Testis (tissue), 5 donors: ENCODE measurements at regions of chr10 and their contacts with region 1.

Region 1: DNA sequence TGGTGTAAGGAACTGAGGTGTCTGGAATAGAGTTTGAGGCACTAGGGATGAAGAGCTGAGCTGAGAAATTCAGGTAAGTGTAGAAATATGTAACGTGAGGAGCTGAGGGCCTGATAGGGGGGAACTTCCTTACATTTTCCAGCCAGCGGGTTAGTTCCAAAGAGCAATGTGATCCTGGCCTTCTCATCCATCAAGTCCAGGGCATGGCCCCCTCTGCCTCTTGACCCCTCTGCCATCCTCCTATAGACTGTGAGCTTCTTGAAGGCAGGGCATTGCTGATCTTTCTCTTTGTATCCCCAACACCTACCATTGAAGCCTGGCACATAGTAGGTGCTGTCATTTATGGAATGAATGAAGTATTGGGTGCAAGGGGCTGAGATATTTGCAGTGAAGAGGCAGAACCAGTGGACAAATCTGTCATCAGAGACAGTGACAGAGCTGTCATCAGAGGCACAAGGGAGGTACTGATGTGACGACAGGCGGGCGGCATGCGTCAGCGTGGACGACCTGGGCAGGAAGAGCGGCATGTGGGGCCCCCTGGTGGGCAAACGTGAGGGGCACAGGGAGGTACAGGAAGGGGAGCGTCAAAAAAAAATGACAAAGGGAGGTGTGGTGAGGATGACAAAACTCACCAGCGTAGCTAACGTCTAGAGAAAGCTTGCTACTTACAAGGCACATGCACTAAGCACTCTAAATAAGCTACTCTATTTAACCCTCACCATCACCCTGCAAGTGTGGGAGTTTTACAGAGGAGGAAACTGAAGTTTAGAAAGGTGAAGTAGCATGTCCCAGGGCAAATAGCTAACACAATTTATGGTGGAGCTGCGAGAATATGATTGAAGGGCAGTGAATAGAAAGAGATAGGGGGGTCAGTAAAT is 5.2 kb upstream of the CAMK2G start:
- DNase-seq: peak; percentile 88
- H3K4me3 ChIP-seq: no peak overlapping the region
- H3K27ac ChIP-seq: no peak overlapping the region
- H3K4me1 ChIP-seq: peaks cover 5% of the 10 kb centered on the region
- H3K27me3 ChIP-seq: no peaks in the 10 kb centered on the region
- CTCF ChIP-seq: peak; percentile 87 to 91 (median 89)
- POLR2A ChIP-seq: no peak

Region 2: DNA sequence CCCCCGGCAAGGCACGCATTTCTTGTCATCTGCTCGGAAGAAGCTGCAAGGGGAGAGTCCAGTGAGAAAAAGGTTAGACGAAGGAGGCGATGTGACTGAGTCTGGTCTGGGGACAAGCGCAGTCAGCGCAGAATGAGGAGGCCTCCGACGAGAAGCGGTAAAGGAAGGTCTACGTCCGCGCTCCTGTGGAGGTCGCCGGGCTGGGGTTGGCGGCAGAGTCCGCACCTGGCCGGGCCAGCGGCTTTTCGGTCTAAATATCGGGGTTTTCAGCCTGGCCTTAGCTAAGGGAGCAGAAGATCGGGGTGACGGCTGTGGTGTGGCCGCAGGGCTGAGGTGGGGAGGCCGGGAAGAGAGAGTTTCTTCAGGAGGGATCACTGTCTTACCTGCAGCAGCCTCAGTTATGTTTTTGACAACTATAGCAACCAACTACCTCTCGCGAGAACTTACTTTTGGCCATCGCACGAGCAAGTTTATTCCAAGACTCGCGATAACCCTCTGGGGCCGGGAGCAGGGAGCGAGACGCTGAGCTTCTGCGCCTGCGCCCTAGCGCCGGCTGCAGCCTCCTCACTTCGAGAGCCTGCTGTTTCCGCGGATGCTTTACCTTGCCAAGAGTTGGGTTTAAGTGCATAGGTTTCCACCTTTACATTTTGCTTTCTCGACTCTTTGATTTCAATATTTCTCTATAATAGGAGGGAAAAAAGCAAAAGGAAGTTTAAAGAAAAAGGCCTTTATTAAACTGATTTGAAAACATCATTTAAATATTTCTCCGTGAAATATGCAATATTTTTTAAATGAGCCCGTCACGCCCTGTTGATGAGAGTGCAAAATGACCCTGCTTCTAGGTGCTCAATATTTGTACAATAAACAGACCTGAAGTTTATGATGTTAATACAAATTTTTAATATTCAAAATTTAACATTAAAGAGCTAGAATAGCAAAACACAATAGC is 520.9 kb before region 1 on chr10 and contains the start of gene CFAP70:
- intact Hi-C with region 1: no loop called
- DNase-seq: peak; percentile 95
- H3K4me3 ChIP-seq: peak within 1 kb of the TSS; percentile 70 to 86
- H3K27ac ChIP-seq: peak within 1 kb of the TSS in 1 of 2 donors; percentile 49
- H3K4me1 ChIP-seq: no peaks in the 10 kb centered on the region
- H3K27me3 ChIP-seq: no peaks in the 10 kb centered on the region
- CTCF ChIP-seq: no peak
- POLR2A ChIP-seq: no peak
- total RNA-seq, gene CFAP70: 29.6 to 46.2 TPM

Region 3: DNA sequence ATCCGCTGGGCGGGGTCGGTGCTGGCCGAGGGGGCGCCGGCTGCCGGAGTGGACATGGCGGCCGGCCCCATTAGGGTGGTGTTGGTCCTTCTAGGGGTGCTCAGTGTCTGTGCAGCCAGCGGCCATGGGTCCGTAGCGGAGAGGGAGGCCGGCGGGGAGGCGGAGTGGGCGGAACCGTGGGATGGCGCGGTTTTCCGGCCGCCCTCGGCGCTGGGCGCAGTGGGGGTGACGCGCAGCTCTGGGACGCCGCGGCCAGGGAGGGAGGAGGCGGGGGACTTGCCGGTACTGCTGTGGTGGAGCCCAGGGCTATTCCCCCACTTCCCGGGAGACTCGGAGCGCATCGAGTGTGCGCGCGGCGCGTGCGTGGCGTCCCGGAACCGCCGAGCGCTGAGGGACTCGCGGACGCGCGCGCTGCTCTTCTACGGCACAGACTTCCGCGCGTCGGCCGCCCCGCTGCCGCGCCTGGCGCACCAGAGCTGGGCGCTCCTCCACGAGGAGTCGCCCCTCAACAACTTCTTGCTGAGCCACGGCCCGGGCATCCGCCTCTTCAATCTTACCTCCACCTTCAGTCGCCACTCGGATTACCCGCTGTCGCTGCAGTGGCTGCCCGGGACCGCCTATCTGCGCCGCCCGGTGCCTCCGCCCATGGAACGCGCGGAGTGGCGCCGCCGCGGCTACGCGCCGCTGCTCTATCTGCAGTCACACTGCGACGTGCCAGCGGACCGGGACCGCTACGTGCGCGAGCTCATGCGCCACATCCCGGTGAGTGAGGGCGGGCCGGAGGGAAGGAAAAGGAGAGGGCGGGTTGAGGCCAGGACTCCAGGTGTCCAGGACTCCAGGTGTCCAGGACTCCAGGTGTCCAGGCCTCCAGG is 107.0 kb before region 1 on chr10:
- intact Hi-C with region 1: no loop called
- DNase-seq: peak; percentile 80
- H3K4me3 ChIP-seq: peak overlapping the region; percentile 73 to 92
- H3K27ac ChIP-seq: peak overlapping the region; percentile 95 to 96
- H3K4me1 ChIP-seq: peaks cover 22% of the 10 kb centered on the region
- H3K27me3 ChIP-seq: no peaks in the 10 kb centered on the region
- CTCF ChIP-seq: peak in 1 of 3 experiments; percentile 17
- POLR2A ChIP-seq: peak; percentile 42

Region 4: GRCh38 chr10:73848821-73849489 is 30.6 kb before region 1 on chr10:
- intact Hi-C with region 1: loop called (anchors 2 kb)
- DNase-seq: peak; percentile 91
- H3K4me3 ChIP-seq: no peak overlapping the region
- H3K27ac ChIP-seq: no peak overlapping the region
- H3K4me1 ChIP-seq: peaks cover 18% of the 10 kb centered on the region
- H3K27me3 ChIP-seq: no peaks in the 10 kb centered on the region
- CTCF ChIP-seq: peak; percentile 95 to 99 (median 99)
- POLR2A ChIP-seq: no peak

Region 5: DNA sequence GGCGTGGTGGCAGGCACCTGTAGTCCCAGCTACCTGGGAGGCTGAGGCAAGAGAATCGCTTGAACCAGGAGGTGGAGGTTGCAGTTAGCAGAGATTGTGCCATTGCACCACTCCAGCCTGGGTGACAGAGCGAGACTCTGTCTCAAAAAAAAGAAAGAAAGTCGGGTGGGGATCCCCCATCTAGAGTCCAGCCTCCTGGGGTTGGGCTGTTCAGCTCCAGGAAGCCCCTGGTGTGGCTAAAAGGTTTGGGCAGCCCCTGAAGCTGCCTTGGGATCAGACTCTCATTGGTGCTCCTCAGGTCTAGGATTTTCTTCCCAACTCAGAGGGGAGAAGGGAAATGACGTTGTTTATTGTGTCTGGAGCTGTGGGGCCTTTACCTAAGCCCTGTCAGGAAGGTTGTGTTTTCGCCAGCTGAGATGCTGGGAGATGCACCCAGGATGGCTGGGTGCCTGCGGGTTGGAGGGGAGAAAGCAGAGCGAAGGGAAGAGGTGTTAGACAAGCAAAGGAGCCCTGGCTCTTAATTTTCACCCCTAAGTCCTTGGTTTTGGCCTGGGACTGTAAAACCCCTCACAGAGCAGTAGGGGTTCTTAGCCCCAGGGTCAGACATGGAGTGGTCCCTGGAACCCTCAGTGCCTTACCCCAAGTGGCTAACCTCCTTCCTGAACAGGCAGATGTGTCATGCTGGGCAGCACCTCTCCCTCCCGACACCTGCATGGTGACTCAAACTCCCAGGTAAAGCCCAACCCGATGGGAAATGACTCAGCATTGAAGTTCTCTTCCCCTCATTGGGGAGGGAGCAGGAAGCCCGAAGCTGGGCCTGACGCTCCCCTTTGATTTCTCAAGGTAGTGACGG is 52.5 kb after region 1 on chr10:
- intact Hi-C with region 1: loop called (anchors 10 kb)
- DNase-seq: no peak
- H3K4me3 ChIP-seq: no peak overlapping the region
- H3K27ac ChIP-seq: peak overlapping the region in 1 of 2 donors; percentile 6
- H3K4me1 ChIP-seq: no peaks in the 10 kb centered on the region
- H3K27me3 ChIP-seq: no peaks in the 10 kb centered on the region
- CTCF ChIP-seq: no peak
- POLR2A ChIP-seq: no peak

Region 6: GRCh38 chr10:74518061-74518460 is 638.5 kb after region 1 on chr10:
- intact Hi-C with region 1: no loop called
- DNase-seq: no peak
- H3K4me3 ChIP-seq: no peak overlapping the region
- H3K27ac ChIP-seq: no peak overlapping the region
- H3K4me1 ChIP-seq: no peaks in the 10 kb centered on the region
- H3K27me3 ChIP-seq: no peaks in the 10 kb centered on the region
- CTCF ChIP-seq: no peak
- POLR2A ChIP-seq: no peak

Region 7: DNA sequence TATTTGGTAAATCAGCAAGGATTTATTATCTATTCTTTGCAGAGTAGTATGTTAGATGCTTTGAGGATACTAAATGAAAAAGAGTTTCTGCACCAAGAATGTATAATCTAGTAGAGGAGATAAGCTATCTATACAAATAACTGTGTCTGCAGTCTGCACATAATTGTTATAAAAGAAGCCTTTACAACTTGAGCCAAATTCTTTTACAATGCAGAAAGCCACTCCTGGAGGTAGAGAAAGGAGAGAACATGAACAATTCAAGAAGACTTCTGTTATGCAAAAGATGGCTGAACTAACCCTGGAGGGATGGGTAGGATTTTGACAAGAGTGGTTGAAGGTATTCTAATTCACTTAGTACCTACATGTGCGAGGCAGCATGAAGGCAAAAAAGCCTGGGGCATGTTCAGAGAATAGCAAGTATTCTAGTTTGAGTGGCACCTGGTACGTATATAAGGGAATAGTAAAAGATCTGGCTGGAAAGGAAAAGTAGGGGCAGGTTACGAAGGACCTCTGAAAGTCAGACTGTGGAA is 695.7 kb after region 1 on chr10:
- intact Hi-C with region 1: no loop called
- DNase-seq: no peak
- H3K4me3 ChIP-seq: no peak overlapping the region
- H3K27ac ChIP-seq: no peak overlapping the region
- H3K4me1 ChIP-seq: no peaks in the 10 kb centered on the region
- H3K27me3 ChIP-seq: no peaks in the 10 kb centered on the region
- CTCF ChIP-seq: no peak
- POLR2A ChIP-seq: no peak